Activated T-helper 1 cell treated with anti-CD3 and anti-CD28 coated beads, Interleukin-12 subunit alpha, Interleukin-12 subunit beta, Interleukin-2, Interleukin-4 antibody, amounts not matched to agents 30 ng/mL and 10 ng/mL and 1 ng/mL, durations not matched to agents 14 hours and 24 hours and 36 hours (primary cell): ENCODE measurements at regions of chr5 and their contacts with region 1.

Region 1: DNA sequence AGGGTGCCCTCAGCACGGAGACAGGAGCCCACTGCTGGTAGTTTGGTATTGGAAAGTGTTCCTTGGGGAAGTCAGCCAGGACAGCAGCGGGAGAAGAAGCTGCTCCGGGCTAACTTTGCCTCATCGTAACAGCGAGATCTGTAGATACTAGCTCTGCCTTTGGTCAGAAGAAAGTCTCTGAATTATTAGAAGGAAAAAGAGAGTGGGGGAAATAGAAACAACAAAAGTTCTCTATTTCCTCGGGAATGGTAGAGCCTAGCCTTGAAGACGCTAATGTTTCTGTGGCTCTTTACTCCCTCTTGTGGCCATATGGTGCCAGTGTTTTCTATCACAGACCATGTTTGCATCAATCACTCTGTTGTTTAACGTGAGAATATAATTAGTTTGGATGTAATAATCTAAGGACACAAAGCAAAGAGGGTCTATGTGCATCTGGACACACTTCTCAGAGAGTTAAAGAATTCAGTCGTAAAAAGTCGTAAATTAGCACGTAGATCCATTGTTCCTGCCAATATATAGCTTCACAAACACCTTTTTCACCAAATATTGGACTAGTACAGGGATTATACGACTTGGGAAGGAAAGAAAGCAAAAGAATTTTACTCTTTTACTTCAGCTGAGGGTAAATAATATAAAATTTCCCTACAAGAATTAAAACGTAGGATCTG is 40.2 kb upstream of the HSD17B4 start:
- DNase-seq: peak; percentile 36
- H3K4me3 Mint-ChIP-seq: peak overlapping the region; percentile 84
- H3K27ac Mint-ChIP-seq: peak overlapping the region; percentile 38
- H3K4me1 Mint-ChIP-seq: peaks cover 35% of the 10 kb centered on the region
- H3K27me3 Mint-ChIP-seq: peaks cover 4% of the 10 kb centered on the region

Region 2: DNA sequence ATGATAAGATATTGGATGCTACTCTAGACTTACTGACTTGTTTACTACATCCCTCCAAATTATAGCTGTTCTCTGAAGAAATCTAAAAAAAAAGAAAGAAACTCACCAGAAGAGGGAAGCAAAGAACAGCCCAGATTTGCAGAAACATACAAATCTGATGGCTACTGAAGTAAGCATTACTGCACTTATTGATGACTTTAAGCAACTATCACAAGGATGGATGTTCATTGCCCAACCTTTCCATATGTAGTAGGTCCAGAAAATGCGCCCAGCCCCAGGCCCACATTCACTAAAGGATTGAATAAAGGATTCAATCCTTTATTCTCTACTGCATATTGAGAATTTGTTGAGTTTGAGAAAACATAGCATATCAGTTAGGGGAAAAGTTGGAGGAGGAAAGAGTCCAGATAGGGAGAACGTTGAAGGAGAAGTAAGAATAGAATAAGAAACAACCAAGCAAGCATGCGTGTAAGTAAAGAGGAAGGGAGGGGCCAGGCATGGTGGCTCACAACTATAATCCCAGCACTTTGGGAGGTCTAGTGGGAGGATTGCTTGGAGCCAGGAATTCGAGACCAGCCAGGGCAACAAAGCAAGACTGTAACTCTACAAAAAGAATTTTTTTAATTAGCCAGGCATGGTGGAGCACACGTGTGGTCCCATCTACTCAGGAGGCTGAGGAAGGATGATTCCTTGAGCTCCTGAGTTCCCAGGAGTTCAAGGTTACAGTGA is 389.9 kb before region 1 on chr5:
- intact Hi-C with region 1: loop called (anchors 1 kb)
- DNase-seq: no peak
- H3K4me3 Mint-ChIP-seq: no peak overlapping the region
- H3K27ac Mint-ChIP-seq: no peak overlapping the region
- H3K4me1 Mint-ChIP-seq: peaks cover 4% of the 10 kb centered on the region
- H3K27me3 Mint-ChIP-seq: peaks cover 1% of the 10 kb centered on the region

Region 3: DNA sequence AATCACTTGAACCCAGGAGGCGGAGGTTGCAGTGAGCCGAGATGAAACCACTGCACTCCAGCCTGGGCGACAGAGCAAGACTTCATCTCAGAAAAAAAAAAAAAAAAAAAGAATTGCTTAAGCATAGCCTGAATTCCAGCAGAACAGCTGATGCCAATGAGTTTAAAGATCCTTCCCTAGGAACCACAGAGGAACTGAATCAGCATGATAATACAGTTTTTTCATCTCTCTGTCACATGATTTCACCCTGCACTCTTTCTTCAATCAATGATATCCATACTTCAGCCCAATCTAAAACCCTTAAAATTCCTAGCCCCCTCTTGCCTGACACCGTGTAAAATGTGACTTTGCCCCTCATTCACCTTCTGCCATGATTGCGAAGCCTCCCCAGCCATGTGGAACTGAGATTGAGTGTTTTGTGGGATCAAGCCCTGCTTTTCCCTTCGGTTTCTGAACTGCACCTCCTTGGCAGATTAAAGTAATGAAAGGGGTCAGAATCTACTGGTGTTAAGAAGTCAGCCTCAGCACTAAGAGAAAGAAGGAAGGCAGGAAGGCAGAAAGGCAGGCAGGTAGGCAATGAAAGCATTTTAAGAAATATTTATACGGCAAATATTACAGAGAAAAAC is 362.1 kb before region 1 on chr5:
- intact Hi-C with region 1: no loop called
- DNase-seq: no peak
- H3K4me3 Mint-ChIP-seq: no peak overlapping the region
- H3K27ac Mint-ChIP-seq: no peak overlapping the region
- H3K4me1 Mint-ChIP-seq: no peaks in the 10 kb centered on the region
- H3K27me3 Mint-ChIP-seq: peaks cover 7% of the 10 kb centered on the region

Region 4: DNA sequence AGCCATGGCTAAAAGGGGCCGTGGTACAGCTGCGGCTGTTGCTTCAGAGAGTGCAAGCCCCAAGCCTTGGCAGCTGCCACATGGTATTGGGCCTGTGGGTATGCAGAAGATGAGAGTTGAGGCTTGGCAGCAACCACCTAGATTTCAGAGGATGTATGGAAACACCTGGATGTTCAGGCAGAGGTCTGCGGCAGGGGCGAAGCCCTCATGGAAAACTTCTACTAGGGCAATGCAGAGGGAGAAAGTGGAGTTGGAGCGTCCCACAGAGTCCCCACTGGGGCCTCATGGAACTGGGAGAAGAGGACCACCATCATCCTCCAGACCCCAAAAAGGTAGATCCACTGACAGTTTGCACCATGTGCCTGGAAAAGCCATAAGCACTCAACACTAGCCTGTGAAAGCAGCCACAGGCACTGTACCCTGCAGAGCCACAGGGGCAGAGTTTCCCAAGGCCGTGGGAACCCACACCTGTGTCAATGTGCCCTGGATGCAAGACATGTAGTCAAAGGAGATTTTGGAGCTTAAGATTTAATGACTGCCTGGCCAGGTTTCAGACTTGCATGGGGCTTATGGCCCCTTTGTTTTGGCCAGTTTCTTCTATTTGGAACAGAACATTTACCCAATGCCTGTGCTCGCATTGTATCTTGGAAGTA is 275.3 kb before region 1 on chr5:
- intact Hi-C with region 1: no loop called
- DNase-seq: no peak
- H3K4me3 Mint-ChIP-seq: no peak overlapping the region
- H3K27ac Mint-ChIP-seq: no peak overlapping the region
- H3K4me1 Mint-ChIP-seq: no peaks in the 10 kb centered on the region
- H3K27me3 Mint-ChIP-seq: no peaks in the 10 kb centered on the region

Region 5: GRCh38 chr5:119315516-119315949 is 96.5 kb before region 1 on chr5:
- intact Hi-C with region 1: loop called (anchors 1 kb)
- DNase-seq: no peak
- H3K4me3 Mint-ChIP-seq: peak overlapping the region; percentile 27
- H3K27ac Mint-ChIP-seq: peak overlapping the region; percentile 84
- H3K4me1 Mint-ChIP-seq: peaks cover 93% of the 10 kb centered on the region
- H3K27me3 Mint-ChIP-seq: no peaks in the 10 kb centered on the region

Region 6: GRCh38 chr5:119435436-119436132 is 23.5 kb after region 1 on chr5:
- intact Hi-C with region 1: loop called (anchors 2 kb)
- DNase-seq: peak; percentile 43
- H3K4me3 Mint-ChIP-seq: no peak overlapping the region
- H3K27ac Mint-ChIP-seq: no peak overlapping the region
- H3K4me1 Mint-ChIP-seq: peaks cover 26% of the 10 kb centered on the region
- H3K27me3 Mint-ChIP-seq: peaks cover 12% of the 10 kb centered on the region